ENCODE measurements at regions of chr2 and their contacts with region 1.

Region 1: DNA sequence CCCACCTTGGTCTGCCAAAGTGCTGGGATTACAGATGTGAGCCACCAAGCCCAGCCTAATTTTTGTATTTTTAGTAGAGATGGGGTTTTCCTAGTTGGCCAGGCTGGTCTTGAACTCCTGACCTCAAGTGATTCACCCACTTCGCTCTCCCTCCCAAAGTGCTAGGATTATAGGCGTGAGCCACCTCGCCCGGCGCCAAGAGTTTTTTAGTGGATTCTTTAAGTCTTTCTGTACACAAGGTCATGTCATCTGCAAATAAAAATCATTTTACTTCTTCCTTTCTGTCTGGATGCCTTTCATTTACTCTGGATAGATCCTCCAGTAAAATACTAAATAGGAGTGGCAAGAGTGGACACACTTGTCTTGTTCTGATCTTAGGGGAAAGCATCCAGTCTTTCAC is 61.7 kb downstream of the KCMF1 start:
- DNase-seq: no peak
- H3K4me3 ChIP-seq: no peak overlapping the region
- H3K27ac ChIP-seq: no peak overlapping the region
- H3K4me1 ChIP-seq: peaks cover 0 to 5% (median under 1%) of the 10 kb centered on the region in 4 experiments; a peak in 2 of 7 replicates
- H3K27me3 ChIP-seq: no peaks in the 10 kb centered on the region
- CTCF ChIP-seq: no peak
- EP300 ChIP-seq: no peak
- POLR2A ChIP-seq: no peak
- RAD21 ChIP-seq: no peak

Region 2: DNA sequence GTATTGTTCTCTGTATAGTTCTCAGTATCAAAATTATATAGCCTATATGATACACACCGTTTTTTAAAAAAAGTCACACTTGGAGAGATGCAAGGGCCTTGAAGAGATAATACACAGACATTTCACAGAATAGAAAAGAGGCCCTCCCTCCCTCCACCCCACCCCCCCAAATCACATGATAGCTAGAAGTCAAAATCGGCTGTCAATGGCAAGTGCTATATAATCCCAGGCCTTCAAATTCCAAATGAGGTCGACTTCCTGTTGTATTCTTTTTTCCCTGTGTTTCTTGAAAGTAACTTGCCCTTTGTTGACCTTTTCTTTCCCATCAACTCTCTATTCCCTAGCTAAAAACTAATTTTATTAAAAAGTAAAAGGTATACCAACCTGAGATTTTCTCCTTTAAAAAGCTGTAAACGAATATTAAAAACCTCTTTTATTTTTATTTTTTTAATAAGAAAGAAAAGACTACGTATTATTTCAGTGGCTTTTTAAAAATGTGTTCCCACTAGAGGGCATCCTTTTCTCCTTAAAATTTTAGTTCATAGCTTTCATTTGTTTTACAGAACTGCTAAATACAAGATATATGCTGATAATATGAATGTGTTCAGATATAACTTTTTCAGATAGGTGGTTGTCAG is 15.1 kb before region 1 on chr2:
- CTCF ChIA-PET with region 1: interaction called, 14 read pairs
- POLR2A ChIA-PET with region 1: interaction called, 5 read pairs
- DNase-seq: no peak
- H3K4me3 ChIP-seq: no peak overlapping the region
- H3K27ac ChIP-seq: no peak overlapping the region
- H3K4me1 ChIP-seq: peaks cover 0 to 2% (median 0%) of the 10 kb centered on the region in 4 experiments; a peak in 2 of 7 replicates
- H3K27me3 ChIP-seq: no peaks in the 10 kb centered on the region
- CTCF ChIP-seq: peak in 1 of 3 experiments; percentile 15; a peak in 2 of 4 replicates
- EP300 ChIP-seq: no peak
- POLR2A ChIP-seq: no peak
- RAD21 ChIP-seq: no peak

Region 3: GRCh38 chr2:85076618-85077274 is 44.1 kb after region 1 on chr2:
- CTCF ChIA-PET with region 1: no interaction called
- POLR2A ChIA-PET with region 1: no interaction called
- DNase-seq: no peak
- H3K4me3 ChIP-seq: no peak overlapping the region
- H3K27ac ChIP-seq: no peak overlapping the region
- H3K4me1 ChIP-seq: no peaks in the 10 kb centered on the region; a peak in 1 of 7 replicates
- H3K27me3 ChIP-seq: no peaks in the 10 kb centered on the region; a peak in 2 of 7 replicates
- CTCF ChIP-seq: no peak
- EP300 ChIP-seq: no peak
- POLR2A ChIP-seq: no peak
- RAD21 ChIP-seq: no peak

Measured in H1 (cell line).